Common myeloid progenitor, CD34-positive (primary cell): ENCODE measurements at regions of chr1 and their contacts with region 1.

Region 1: GRCh38 chr1:192550922-192551534 is 24.5 kb upstream of the RGS1 start:
- DNase-seq: peak; percentile 42 to 90 (median 86)
- H3K4me3 ChIP-seq: peak overlapping the region in 1 of 7 experiments; percentile 18
- H3K27ac ChIP-seq: no peak overlapping the region
- H3K4me1 ChIP-seq: peaks cover 17 to 42% (median 28%) of the 10 kb centered on the region in 4 experiments
- H3K27me3 ChIP-seq: no peaks in the 10 kb centered on the region

Region 2: DNA sequence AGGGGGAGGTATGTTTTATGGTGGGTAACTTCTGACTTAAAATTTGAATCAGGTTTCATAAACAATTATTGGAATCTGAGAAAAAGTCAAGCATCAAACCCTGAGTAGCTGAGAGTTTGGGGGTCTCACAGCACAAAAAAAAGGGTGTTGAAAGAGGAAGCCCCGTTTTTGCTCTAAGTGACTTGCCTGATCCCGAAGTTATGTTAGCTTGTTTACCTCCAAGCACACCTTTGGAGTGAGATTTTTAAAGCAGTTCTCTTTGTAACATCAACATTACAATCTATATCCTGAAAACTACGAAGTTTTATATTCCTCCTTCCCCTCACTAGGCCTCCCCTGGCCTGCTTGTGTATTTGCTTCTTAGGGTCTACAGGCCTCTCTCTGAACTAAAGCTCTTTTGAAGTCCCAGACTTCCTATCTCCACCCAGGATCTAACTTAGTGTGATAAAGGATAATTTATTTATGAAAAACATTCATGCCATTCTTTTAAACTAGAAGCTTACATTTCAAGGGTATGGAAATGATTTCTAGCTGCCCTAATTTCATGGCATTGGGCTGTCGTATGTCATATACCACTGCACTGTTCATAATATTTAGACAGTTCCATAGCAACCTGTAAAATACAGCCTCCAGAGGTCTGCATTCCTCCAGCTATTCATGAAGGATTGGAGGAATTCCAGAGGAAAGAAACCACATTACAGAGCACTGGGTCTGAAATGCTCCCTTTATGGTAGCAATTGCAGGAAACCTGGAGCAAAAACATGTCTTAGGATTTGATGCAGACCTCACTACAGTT is 11.5 kb before region 1 on chr1:
- CTCF ChIA-PET with region 1: interaction called, 48 read pairs
- POLR2A ChIA-PET with region 1: interaction called, 5 read pairs
- DNase-seq: peak in 2 of 3 donors; percentile 40 to 59
- H3K4me3 ChIP-seq: peak overlapping the region in 2 of 7 experiments; percentile 11 to 33
- H3K27ac ChIP-seq: peak overlapping the region; percentile 70 to 81
- H3K4me1 ChIP-seq: peaks cover 9 to 16% (median 10%) of the 10 kb centered on the region in 4 experiments
- H3K27me3 ChIP-seq: no peaks in the 10 kb centered on the region